ENCODE measurements at regions of chr21 and their contacts with region 1.

Region 1: GRCh38 chr21:39388038-39388810 is 39.3 kb upstream of the HMGN1 start:
- DNase-seq: peak; percentile 16
- H3K4me3 ChIP-seq: peak overlapping the region; percentile 61
- CTCF ChIP-seq: peak; percentile 98

Region 2: GRCh38 chr21:39312112-39313001 is 75.9 kb before region 1 on chr21:
- CTCF ChIA-PET with region 1: interaction called, 4 read pairs
- POLR2A ChIA-PET with region 1: interaction called, 14 read pairs
- DNase-seq: no peak
- H3K4me3 ChIP-seq: peak overlapping the region; percentile 76
- CTCF ChIP-seq: no peak

Region 3: GRCh38 chr21:39406065-39406464 is 17.8 kb after region 1 on chr21:
- CTCF ChIA-PET with region 1: interaction called, 12 read pairs
- POLR2A ChIA-PET with region 1: no interaction called
- DNase-seq: no peak
- H3K4me3 ChIP-seq: no peak overlapping the region
- CTCF ChIP-seq: no peak